HepG2 (cell line): ENCODE measurements at regions of chr7 and their contacts with region 1.

Region 1: GRCh38 chr7:131068604-131069021 is 259.1 kb upstream of the MKLN1 start:
- DNase-seq: no peak
- ATAC-seq: no peak
- H3K4me3 ChIP-seq: no peak overlapping the region
- H3K27ac ChIP-seq: peak overlapping the region; percentile 3
- H3K4me1 ChIP-seq: peaks cover 76% of the 10 kb centered on the region
- H3K27me3 ChIP-seq: no peaks in the 10 kb centered on the region
- CTCF ChIP-seq: peak; percentile 37
- EP300 ChIP-seq: no peak
- POLR2A ChIP-seq: no peak
- RAD21 ChIP-seq: no peak

Region 2: DNA sequence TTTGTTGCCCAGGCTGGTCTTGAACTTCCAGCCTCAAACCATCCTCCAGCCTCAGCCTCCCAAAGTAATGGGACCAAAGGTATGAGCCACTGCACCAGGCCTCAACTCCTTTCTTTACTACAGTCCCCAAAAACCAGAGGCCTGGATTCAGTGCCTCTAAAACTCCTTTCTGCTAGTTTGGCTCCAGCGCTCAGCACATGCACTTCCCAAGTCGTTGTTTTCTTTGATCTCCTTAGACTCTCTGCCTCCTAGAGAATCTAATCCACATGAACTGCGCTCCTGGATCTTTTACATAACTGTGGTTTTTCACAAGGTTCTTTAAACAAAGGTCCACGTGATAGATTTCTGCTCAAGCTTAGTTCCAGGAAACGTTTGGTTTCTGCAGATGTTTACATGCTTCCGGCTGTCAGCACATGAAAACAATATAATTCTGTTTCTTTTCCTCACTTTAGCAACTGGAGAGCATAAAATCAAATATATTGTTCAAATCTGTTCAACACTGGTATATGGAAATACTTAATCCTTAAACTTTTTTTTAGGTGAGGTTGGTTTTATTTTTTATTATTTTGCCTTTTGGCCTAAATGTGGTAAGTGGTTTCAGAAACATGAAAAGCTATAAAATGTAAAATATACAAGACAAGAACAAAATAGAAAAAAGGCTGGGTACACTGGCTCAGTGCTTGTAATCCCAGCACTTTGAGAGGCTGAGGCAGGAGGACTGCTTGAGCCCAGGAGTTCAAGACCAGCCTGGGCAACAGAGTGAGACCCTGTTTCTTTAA is 11.4 kb before region 1 on chr7:
- CTCF ChIA-PET with region 1: no interaction called
- POLR2A ChIA-PET with region 1: interaction called, 12 read pairs
- in situ Hi-C with region 1: no loop called
- intact Hi-C with region 1: loop called (anchors 1 kb)
- DNase-seq: peak; percentile 89
- ATAC-seq: peak; percentile 77
- H3K4me3 ChIP-seq: no peak overlapping the region; a peak in 1 of 6 replicates
- H3K27ac ChIP-seq: peak overlapping the region; percentile 77
- H3K4me1 ChIP-seq: peaks cover 66% of the 10 kb centered on the region
- H3K27me3 ChIP-seq: no peaks in the 10 kb centered on the region
- CTCF ChIP-seq: no peak
- EP300 ChIP-seq: peak in 1 of 2 experiments; percentile 98; a peak in 2 of 4 replicates
- POLR2A ChIP-seq: 0 out of 4 replicates have a peak, but pooled peaks of 1 of the 2 experiments have one; percentile 24
- RAD21 ChIP-seq: no peak

Region 3: DNA sequence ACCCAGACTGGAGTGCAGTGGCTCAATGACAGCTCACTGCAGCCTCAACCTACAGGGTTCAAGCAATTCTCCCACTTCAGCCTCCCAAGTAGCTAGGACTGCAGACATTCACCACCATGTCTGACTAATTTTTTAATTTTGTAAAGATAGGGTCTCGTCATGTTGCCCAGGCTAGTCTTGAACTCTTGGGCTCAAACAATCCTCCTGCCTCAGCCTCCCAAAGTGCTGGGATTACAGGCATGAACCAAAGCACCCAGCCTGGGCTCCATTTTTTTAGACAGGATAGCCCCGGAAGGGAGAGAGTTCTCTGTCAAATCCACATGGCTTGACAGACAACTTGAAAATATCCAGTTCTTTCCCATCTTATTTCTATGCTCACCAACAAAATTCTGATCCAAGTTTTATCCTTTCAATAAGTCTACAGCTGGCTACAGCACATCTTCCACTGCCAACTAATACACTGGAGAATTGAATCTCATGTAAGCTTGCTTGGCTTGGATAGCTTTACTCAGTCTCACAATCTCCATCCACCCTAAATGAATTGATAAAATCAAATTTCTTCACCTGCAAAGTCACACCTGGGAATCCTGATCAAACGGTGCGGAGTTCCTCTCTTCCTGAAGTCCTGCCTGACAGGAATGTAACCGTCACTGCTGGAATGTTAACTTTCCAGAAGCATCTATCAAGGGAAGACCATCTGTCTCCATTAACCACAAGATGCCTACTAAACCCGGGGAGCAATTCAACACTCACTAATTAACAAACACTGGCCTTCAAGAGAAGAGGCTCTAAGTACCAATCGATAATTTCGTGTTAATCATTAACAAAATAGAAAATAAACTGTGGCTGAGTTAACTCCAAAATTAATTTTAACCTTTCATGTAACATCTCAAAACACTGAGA is 19.4 kb after region 1 on chr7:
- CTCF ChIA-PET with region 1: no interaction called
- POLR2A ChIA-PET with region 1: interaction called, 12 read pairs
- in situ Hi-C with region 1: no loop called
- intact Hi-C with region 1: no loop called
- DNase-seq: peak; percentile 61
- ATAC-seq: peak; percentile 53
- H3K4me3 ChIP-seq: peak overlapping the region; percentile 6 to 34 (median 14); a peak in 4 of 6 replicates
- H3K27ac ChIP-seq: peak overlapping the region; percentile 61
- H3K4me1 ChIP-seq: peaks cover 76% of the 10 kb centered on the region
- H3K27me3 ChIP-seq: no peaks in the 10 kb centered on the region
- CTCF ChIP-seq: no peak
- EP300 ChIP-seq: peak in 1 of 2 experiments; percentile 68; a peak in 2 of 4 replicates
- POLR2A ChIP-seq: peak in 1 of 2 experiments; percentile 30; a peak in 1 of 4 replicates
- RAD21 ChIP-seq: 0 out of 2 replicates have a peak, but pooled peaks have one; percentile 14

Region 4: DNA sequence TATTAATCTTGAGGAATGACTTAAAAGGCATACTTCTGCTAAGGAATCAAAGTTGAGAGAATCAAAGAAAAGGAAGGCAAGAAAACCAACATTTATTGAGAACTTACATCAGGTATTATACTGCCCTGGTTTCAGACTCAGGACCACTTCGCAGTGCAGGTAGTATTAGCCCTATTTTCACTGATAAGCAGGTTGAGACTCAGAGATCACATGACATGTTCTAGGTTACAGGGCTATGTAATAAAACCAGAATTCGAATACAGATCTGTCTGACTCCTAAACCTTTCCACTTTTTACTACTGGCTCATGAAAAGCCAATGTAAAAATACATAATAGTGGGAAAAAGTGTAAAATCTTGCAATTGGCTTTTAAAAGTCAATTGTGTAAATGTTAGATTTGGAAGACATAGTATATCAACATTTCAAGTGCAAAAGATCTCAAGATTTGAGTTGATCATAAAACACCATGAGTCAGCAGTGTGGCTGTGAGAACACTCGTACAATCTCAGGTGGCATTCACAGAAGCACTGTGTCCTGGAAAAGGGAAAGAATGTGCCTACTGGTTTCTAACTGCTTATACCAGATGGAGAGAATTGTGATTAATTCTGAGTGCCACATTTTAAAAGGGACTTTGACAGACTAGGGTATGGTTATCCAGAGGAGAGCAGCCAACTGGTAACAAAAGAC is 63.3 kb after region 1 on chr7:
- CTCF ChIA-PET with region 1: no interaction called
- POLR2A ChIA-PET with region 1: no interaction called
- in situ Hi-C with region 1: no loop called
- intact Hi-C with region 1: no loop called
- DNase-seq: no peak
- ATAC-seq: no peak
- H3K4me3 ChIP-seq: no peak overlapping the region
- H3K27ac ChIP-seq: no peak overlapping the region
- H3K4me1 ChIP-seq: no peaks in the 10 kb centered on the region
- H3K27me3 ChIP-seq: peaks cover 0 to 25% of the 10 kb centered on the region in 2 experiments; a peak in 2 of 5 replicates
- CTCF ChIP-seq: no peak
- EP300 ChIP-seq: no peak
- POLR2A ChIP-seq: no peak
- RAD21 ChIP-seq: no peak

Region 5: GRCh38 chr7:131327626-131328376 is 259.2 kb after region 1 on chr7 and contains the start of gene MKLN1:
- CTCF ChIA-PET with region 1: no interaction called
- POLR2A ChIA-PET with region 1: interaction called, 3 read pairs
- in situ Hi-C with region 1: no loop called
- intact Hi-C with region 1: loop called (anchors 5 kb)
- DNase-seq: peak; percentile 68
- ATAC-seq: peak; percentile 95
- H3K4me3 ChIP-seq: peak within 1 kb of the TSS; percentile 92 to 100 (median 99)
- H3K27ac ChIP-seq: peak within 1 kb of the TSS; percentile 98
- H3K4me1 ChIP-seq: peaks cover 62% of the 10 kb centered on the region
- H3K27me3 ChIP-seq: no peaks in the 10 kb centered on the region; a peak in 1 of 5 replicates
- CTCF ChIP-seq: no peak
- EP300 ChIP-seq: no peak
- POLR2A ChIP-seq: peak; percentile 81 to 91
- RAD21 ChIP-seq: peak; percentile 51
- total RNA-seq, gene MKLN1: 43.5 and 75.4 TPM in 2 replicates